Colonic mucosa (tissue), 4 donors: ENCODE measurements at regions of chr10 and their contacts with region 1.

Region 1: GRCh38 chr10:110584006-110584405 is 16.5 kb downstream of the SMC3 start:
- DNase-seq: no peak
- H3K4me3 ChIP-seq: no peak overlapping the region
- H3K27ac ChIP-seq: no peak overlapping the region
- H3K4me1 ChIP-seq: no peaks in the 10 kb centered on the region
- H3K27me3 ChIP-seq: no peaks in the 10 kb centered on the region
- CTCF ChIP-seq: no peak

Region 2: GRCh38 chr10:110460111-110460809 is 123.7 kb before region 1 on chr10:
- intact Hi-C with region 1: no loop called
- DNase-seq: no peak
- H3K4me3 ChIP-seq: no peak overlapping the region
- H3K27ac ChIP-seq: no peak overlapping the region
- H3K4me1 ChIP-seq: no peaks in the 10 kb centered on the region
- H3K27me3 ChIP-seq: no peaks in the 10 kb centered on the region
- CTCF ChIP-seq: no peak

Region 3: GRCh38 chr10:110671788-110672579 is 88.0 kb after region 1 on chr10:
- intact Hi-C with region 1: no loop called
- DNase-seq: peak; percentile 67
- H3K4me3 ChIP-seq: peak overlapping the region; percentile 55
- H3K27ac ChIP-seq: no peak overlapping the region
- H3K4me1 ChIP-seq: no peaks in the 10 kb centered on the region
- H3K27me3 ChIP-seq: no peaks in the 10 kb centered on the region
- CTCF ChIP-seq: peak; percentile 70

Region 4: GRCh38 chr10:110883924-110884323 is 299.9 kb after region 1 on chr10:
- intact Hi-C with region 1: loop called (anchors 10 kb)
- DNase-seq: no peak
- H3K4me3 ChIP-seq: no peak overlapping the region
- H3K27ac ChIP-seq: no peak overlapping the region
- H3K4me1 ChIP-seq: peaks cover 4% of the 10 kb centered on the region
- H3K27me3 ChIP-seq: no peaks in the 10 kb centered on the region
- CTCF ChIP-seq: no peak